MCF 10A (cell line): ENCODE measurements at regions of chr6 and their contacts with region 1.

Region 1: GRCh38 chr6:37566111-37566949 is 66.6 kb upstream of the CCDC167 start:
- DNase-seq: peak; percentile 34
- H3K4me3 Mint-ChIP-seq: no peak overlapping the region
- H3K27ac Mint-ChIP-seq: no peak overlapping the region
- H3K4me1 Mint-ChIP-seq: no peaks in the 10 kb centered on the region
- H3K27me3 Mint-ChIP-seq: peaks cover 18% of the 10 kb centered on the region
- CTCF ChIP-seq: peak; percentile 93

Region 2: GRCh38 chr6:37483917-37484785 is 82.2 kb before region 1 on chr6:
- CTCF ChIA-PET with region 1: interaction called, 3 read pairs
- POLR2A ChIA-PET with region 1: no interaction called
- intact Hi-C with region 1: loop called (anchors 1 kb)
- DNase-seq: peak; percentile 58
- H3K4me3 Mint-ChIP-seq: no peak overlapping the region
- H3K27ac Mint-ChIP-seq: no peak overlapping the region
- H3K4me1 Mint-ChIP-seq: peaks cover 10% of the 10 kb centered on the region
- H3K27me3 Mint-ChIP-seq: no peaks in the 10 kb centered on the region
- CTCF ChIP-seq: peak; percentile 81

Region 3: DNA sequence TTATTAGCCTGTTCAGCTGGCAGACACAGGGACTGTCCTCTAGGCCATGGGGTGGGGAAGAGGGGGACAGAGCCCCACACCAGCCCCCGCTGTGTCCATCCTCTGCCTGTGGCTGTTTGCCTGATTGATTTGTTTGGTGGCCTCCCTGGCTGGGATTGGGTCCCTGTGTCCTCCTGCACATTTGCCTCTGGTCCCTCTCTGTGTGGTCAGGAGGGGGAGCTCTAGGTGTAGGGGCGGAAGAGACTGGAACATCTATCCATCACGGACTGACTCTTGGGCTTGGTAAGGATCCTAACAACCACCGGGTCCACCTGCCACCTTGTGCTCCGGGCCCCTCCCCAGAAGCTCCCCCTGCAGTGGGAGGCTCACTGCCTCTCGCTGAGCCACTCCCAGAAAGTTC is 28.2 kb before region 1 on chr6:
- CTCF ChIA-PET with region 1: interaction called, 6 read pairs
- POLR2A ChIA-PET with region 1: no interaction called
- intact Hi-C with region 1: loop called (anchors 1 kb)
- DNase-seq: peak; percentile 63
- H3K4me3 Mint-ChIP-seq: no peak overlapping the region
- H3K27ac Mint-ChIP-seq: no peak overlapping the region
- H3K4me1 Mint-ChIP-seq: no peaks in the 10 kb centered on the region
- H3K27me3 Mint-ChIP-seq: peaks cover 21% of the 10 kb centered on the region
- CTCF ChIP-seq: peak; percentile 54